Panc1 (cell line): ENCODE measurements at regions of chr7 and their contacts with region 1.

Region 1: GRCh38 chr7:103870664-103871063 is 118.8 kb downstream of the RELN start:
- DNase-seq: no peak
- ATAC-seq: no peak
- H3K4me3 ChIP-seq: no peak overlapping the region
- H3K27ac ChIP-seq: no peak overlapping the region
- H3K4me1 ChIP-seq: no peaks in the 10 kb centered on the region
- H3K27me3 ChIP-seq: no peaks in the 10 kb centered on the region
- CTCF ChIP-seq: no peak

Region 2: DNA sequence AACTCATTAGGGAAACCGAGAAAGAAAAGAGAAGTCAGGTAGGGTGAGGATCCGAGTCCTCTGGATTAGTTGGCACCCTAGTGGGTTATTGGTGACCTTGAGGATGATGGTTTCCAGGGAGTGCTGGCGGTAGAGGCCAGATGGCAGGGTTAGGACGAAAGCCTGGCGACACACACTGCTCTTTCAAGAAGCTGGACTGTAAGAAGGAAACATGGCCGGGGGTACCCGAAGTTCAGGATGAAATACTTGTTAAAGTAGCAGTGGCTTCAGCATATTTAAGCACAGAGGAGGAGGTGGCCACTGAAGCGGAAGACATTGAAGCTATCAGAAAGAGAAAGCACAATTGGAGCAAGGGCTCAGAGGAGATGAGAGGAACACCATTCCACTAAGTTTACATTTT is 105.8 kb before region 1 on chr7:
- CTCF ChIA-PET with region 1: no interaction called
- POLR2A ChIA-PET with region 1: no interaction called
- in situ Hi-C with region 1: no loop called
- intact Hi-C with region 1: no loop called
- DNase-seq: no peak
- ATAC-seq: no peak
- H3K4me3 ChIP-seq: no peak overlapping the region
- H3K27ac ChIP-seq: no peak overlapping the region
- H3K4me1 ChIP-seq: no peaks in the 10 kb centered on the region
- H3K27me3 ChIP-seq: no peaks in the 10 kb centered on the region
- CTCF ChIP-seq: no peak

Region 3: DNA sequence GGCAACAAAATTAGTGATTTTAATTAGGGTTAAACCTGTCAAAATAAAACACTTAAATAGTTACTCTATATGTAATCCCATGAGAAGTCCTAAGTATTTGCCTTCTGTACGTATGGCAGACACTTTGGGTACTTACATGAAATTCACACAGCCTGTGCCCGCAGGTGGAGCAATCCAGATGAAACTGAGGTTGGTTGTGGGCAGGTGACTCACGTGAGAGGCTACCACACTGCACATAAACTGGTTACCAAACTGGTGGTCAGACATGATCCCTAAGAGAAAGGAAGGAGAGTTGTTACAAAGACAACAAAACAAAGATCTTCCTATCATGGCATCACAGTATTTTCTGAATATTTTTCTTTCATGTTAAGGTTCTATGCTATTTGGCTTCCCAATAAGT is 37.3 kb before region 1 on chr7:
- CTCF ChIA-PET with region 1: no interaction called
- POLR2A ChIA-PET with region 1: no interaction called
- in situ Hi-C with region 1: no loop called
- intact Hi-C with region 1: no loop called
- DNase-seq: no peak
- ATAC-seq: no peak
- H3K4me3 ChIP-seq: no peak overlapping the region
- H3K27ac ChIP-seq: no peak overlapping the region
- H3K4me1 ChIP-seq: no peaks in the 10 kb centered on the region
- H3K27me3 ChIP-seq: peaks cover 2% of the 10 kb centered on the region; the same call in 1 of the 2 replicates
- CTCF ChIP-seq: no peak

Region 4: DNA sequence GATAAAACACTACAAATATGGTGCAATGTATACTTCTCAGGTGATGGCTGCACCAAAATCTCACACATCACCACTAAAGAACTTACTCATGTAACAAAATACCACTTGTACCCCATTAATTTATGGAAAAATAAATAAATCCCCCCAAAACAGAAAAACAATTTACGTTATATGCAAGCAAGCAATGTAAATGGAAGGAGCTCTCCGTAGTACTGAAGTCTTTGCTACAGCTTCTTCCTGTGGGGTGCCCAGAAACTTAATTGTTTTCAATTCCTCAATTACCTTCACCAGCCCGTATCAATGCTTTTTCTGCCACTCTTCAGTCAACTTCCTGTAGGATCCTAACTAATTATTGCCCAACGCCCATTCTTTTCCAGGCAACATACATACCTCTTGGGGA is 19.3 kb before region 1 on chr7:
- CTCF ChIA-PET with region 1: no interaction called
- POLR2A ChIA-PET with region 1: no interaction called
- in situ Hi-C with region 1: no loop called
- intact Hi-C with region 1: loop called (anchors 1 kb)
- DNase-seq: no peak
- ATAC-seq: no peak
- H3K4me3 ChIP-seq: no peak overlapping the region
- H3K27ac ChIP-seq: no peak overlapping the region
- H3K4me1 ChIP-seq: no peaks in the 10 kb centered on the region
- H3K27me3 ChIP-seq: no peaks in the 10 kb centered on the region
- CTCF ChIP-seq: no peak

Region 5: GRCh38 chr7:103887855-103888602 is 17.4 kb after region 1 on chr7:
- CTCF ChIA-PET with region 1: no interaction called
- POLR2A ChIA-PET with region 1: no interaction called
- in situ Hi-C with region 1: no loop called
- intact Hi-C with region 1: no loop called
- DNase-seq: no peak
- ATAC-seq: no peak
- H3K4me3 ChIP-seq: no peak overlapping the region
- H3K27ac ChIP-seq: no peak overlapping the region
- H3K4me1 ChIP-seq: no peaks in the 10 kb centered on the region
- H3K27me3 ChIP-seq: no peaks in the 10 kb centered on the region
- CTCF ChIP-seq: no peak

Region 6: DNA sequence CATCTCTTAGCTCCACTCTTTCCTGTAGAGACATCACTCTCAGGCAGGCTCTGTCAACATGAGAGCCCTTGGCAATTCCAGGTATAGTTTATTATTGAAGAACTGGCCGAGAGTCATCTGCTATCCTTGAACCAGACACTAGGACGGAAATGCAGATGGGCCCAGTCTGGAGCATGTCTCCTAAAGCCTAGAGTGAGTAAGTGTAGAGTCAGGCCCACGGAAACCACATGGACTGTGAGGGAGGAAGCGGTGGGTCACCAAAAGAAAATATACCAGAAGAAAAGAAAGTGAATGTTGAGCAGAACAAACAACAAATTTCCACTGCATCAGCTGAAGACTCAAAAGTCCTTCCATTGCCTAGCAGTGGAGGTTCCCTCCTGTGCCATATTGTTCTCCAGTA is 134.5 kb after region 1 on chr7:
- CTCF ChIA-PET with region 1: no interaction called
- POLR2A ChIA-PET with region 1: no interaction called
- in situ Hi-C with region 1: no loop called
- intact Hi-C with region 1: no loop called
- DNase-seq: no peak
- ATAC-seq: no peak
- H3K4me3 ChIP-seq: no peak overlapping the region
- H3K27ac ChIP-seq: no peak overlapping the region
- H3K4me1 ChIP-seq: no peaks in the 10 kb centered on the region
- H3K27me3 ChIP-seq: peaks cover 2% of the 10 kb centered on the region
- CTCF ChIP-seq: no peak